ENCODE measurements at regions of chr19 and their contacts with region 1.

Region 1: GRCh38 chr19:6110360-6110977 is at the start of gene RFX2:
- DNase-seq: peak; percentile 97 to 100 (median 99)
- ATAC-seq: peak; percentile 99
- H3K4me3 ChIP-seq: peak within 1 kb of the TSS; percentile 60
- H3K4me3 Mint-ChIP-seq: peak within 1 kb of the TSS; percentile 84 to 98 (median 92)
- H3K27ac ChIP-seq: peak within 1 kb of the TSS; percentile 64
- H3K27ac Mint-ChIP-seq: peak within 1 kb of the TSS; percentile 71 to 92 (median 88)
- H3K4me1 ChIP-seq: peaks cover 8 to 10% of the 10 kb centered on the region in 2 donors
- H3K4me1 Mint-ChIP-seq: peaks cover 21 to 27% (median 25%) of the 10 kb centered on the region in 7 donors
- H3K27me3 ChIP-seq: peaks cover 0 to 4% of the 10 kb centered on the region in 2 donors
- H3K27me3 Mint-ChIP-seq: peaks cover 0 to 19% (median 4%) of the 10 kb centered on the region in 5 donors
- total RNA-seq, gene RFX2: 4.0 to 18.4 (median 8.4) TPM

Region 2: GRCh38 chr19:5719961-5720790 is 390.3 kb before region 1 on chr19 and contains the starts of genes CATSPERD and LONP1:
- CTCF ChIA-PET with region 1: no interaction called
- POLR2A ChIA-PET with region 1: no interaction called
- intact Hi-C with region 1: loop called in 1 of 2 experiments (anchors 1 kb)
- DNase-seq: peak; percentile 96 to 100 (median 98)
- ATAC-seq: peak; percentile 95
- H3K4me3 ChIP-seq: peak within 1 kb of the TSS; percentile 86
- H3K4me3 Mint-ChIP-seq: peak within 1 kb of the TSS; percentile 87 to 96 (median 93)
- H3K27ac ChIP-seq: peak within 1 kb of the TSS; percentile 97
- H3K27ac Mint-ChIP-seq: peak within 1 kb of the TSS; percentile 94 to 98 (median 95)
- H3K4me1 ChIP-seq: peaks cover 12 to 16% of the 10 kb centered on the region in 2 donors
- H3K4me1 Mint-ChIP-seq: peaks cover 9 to 42% (median 29%) of the 10 kb centered on the region in 7 donors
- H3K27me3 ChIP-seq: no peaks in the 10 kb centered on the region
- H3K27me3 Mint-ChIP-seq: peaks cover 0 to 2% (median 0%) of the 10 kb centered on the region in 5 donors
- total RNA-seq, gene CATSPERD: 0.07 TPM in 1 of 5 experiments, not detected in the others
- total RNA-seq, gene LONP1: 62.8 to 102 (median 74.8) TPM

Region 3: GRCh38 chr19:5977785-5978605 is 132.5 kb before region 1 on chr19 and contains the start of gene RANBP3:
- CTCF ChIA-PET with region 1: no interaction called
- POLR2A ChIA-PET with region 1: no interaction called
- intact Hi-C with region 1: loop called in 1 of 2 experiments (anchors 1 kb)
- DNase-seq: peak; percentile 94 to 99 (median 99)
- ATAC-seq: peak; percentile 94
- H3K4me3 ChIP-seq: peak within 1 kb of the TSS; percentile 78
- H3K4me3 Mint-ChIP-seq: peak within 1 kb of the TSS; percentile 92 to 99 (median 96)
- H3K27ac ChIP-seq: peak within 1 kb of the TSS; percentile 94
- H3K27ac Mint-ChIP-seq: peak within 1 kb of the TSS; percentile 91 to 97 (median 95)
- H3K4me1 ChIP-seq: peaks cover 31 to 45% of the 10 kb centered on the region in 2 donors
- H3K4me1 Mint-ChIP-seq: peaks cover 42 to 65% (median 55%) of the 10 kb centered on the region in 7 donors
- H3K27me3 ChIP-seq: no peaks in the 10 kb centered on the region
- H3K27me3 Mint-ChIP-seq: peaks cover 0 to 2% (median 0%) of the 10 kb centered on the region in 5 donors
- total RNA-seq, gene RANBP3: 88.3 to 104 (median 94.0) TPM

Region 4: GRCh38 chr19:6041991-6042481 is 68.4 kb before region 1 on chr19:
- CTCF ChIA-PET with region 1: no interaction called
- POLR2A ChIA-PET with region 1: no interaction called
- intact Hi-C with region 1: no loop called
- DNase-seq: no peak
- ATAC-seq: no peak
- H3K4me3 ChIP-seq: no peak overlapping the region
- H3K4me3 Mint-ChIP-seq: no peak overlapping the region
- H3K27ac ChIP-seq: no peak overlapping the region
- H3K27ac Mint-ChIP-seq: no peak overlapping the region
- H3K4me1 ChIP-seq: no peaks in the 10 kb centered on the region
- H3K4me1 Mint-ChIP-seq: peaks cover 0 to 15% (median 0%) of the 10 kb centered on the region in 7 donors
- H3K27me3 ChIP-seq: no peaks in the 10 kb centered on the region
- H3K27me3 Mint-ChIP-seq: no peaks in the 10 kb centered on the region

Region 5: DNA sequence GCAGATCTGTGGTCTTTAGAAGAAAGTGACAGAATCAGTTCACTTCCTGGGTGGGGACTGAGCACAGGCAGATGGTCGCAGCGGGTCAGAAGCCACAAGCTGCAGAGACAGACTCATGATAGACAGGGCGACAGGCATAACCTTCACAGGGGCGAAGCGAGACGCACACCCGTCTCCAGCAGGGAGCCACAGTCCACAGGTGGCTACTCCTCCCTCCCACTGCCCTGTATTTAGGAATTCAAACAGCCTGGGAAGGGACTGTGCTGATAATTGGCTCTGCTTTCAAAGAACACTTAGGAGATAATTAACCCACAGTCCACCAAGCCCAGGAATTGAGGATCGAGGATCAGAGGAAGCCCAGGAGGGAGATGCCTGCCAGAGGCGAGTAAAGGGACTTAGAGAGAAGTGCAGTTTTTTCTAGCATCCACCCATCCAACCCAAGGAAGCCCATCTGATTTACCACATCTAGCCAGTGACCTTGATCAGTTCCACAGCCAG is 23.3 kb before region 1 on chr19:
- CTCF ChIA-PET with region 1: interaction called, 3 read pairs
- POLR2A ChIA-PET with region 1: no interaction called
- intact Hi-C with region 1: loop called in 1 of 2 experiments (anchors 1 kb)
- DNase-seq: peak in 3 of 9 donors; percentile 24 to 37 (median 25)
- ATAC-seq: peak; percentile 54
- H3K4me3 ChIP-seq: peak overlapping the region; percentile 24
- H3K4me3 Mint-ChIP-seq: peak overlapping the region; percentile 71 to 96 (median 82)
- H3K27ac ChIP-seq: peak overlapping the region; percentile 62
- H3K27ac Mint-ChIP-seq: peak overlapping the region; percentile 64 to 94 (median 85)
- H3K4me1 ChIP-seq: peaks cover 10 to 19% of the 10 kb centered on the region in 2 donors
- H3K4me1 Mint-ChIP-seq: peaks cover 18 to 28% (median 21%) of the 10 kb centered on the region in 7 donors
- H3K27me3 ChIP-seq: no peaks in the 10 kb centered on the region
- H3K27me3 Mint-ChIP-seq: peaks cover 0 to 2% (median 0%) of the 10 kb centered on the region in 5 donors

Region 6: DNA sequence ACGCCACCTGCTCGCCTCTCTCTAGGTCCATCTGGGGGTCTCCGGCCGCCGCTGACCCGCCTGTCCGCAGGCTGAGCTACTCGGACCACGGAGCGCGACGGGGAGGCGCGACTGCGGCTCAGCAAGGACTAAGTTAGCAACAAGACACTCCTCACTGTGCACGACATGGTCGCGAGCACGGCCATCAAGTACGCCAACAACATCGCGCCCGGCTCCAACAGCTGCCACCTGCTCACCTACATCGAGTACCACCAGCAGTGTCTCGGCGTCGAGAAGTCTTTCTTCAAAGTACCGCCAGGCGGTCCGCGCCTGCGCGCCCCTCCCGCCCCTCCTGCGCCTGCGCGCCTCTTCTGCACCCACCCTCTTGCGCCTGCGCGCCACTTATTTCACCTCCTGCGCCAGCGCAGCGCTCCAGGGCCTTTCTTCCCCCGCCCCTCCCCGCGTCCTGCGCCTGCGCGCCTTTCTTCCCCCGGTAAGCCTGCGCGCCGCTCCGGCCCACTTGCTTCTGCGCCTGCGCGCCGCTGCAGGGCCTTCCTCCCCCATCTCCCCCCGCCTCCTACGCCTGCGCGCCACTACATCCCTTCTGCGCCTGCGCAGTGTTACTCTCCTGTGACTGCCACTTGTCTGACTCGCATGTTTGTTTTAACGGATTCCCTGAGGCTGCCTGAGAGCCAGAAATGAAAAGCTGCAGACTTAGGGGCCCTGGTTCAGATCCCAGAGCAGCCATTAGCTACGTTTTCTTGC is 88.9 kb after region 1 on chr19:
- CTCF ChIA-PET with region 1: no interaction called
- POLR2A ChIA-PET with region 1: no interaction called
- intact Hi-C with region 1: loop called in 1 of 2 experiments (anchors 1 kb)
- DNase-seq: peak; percentile 97 to 100 (median 99)
- ATAC-seq: peak; percentile 93
- H3K4me3 ChIP-seq: peak overlapping the region; percentile 97
- H3K4me3 Mint-ChIP-seq: peak overlapping the region; percentile 92 to 99 (median 95)
- H3K27ac ChIP-seq: peak overlapping the region; percentile 70
- H3K27ac Mint-ChIP-seq: peak overlapping the region; percentile 89 to 97 (median 91)
- H3K4me1 ChIP-seq: peaks cover 6% of the 10 kb centered on the region in 2 donors
- H3K4me1 Mint-ChIP-seq: peaks cover 5 to 20% (median 18%) of the 10 kb centered on the region in 7 donors
- H3K27me3 ChIP-seq: no peaks in the 10 kb centered on the region
- H3K27me3 Mint-ChIP-seq: peaks cover 0 to 8% (median 4%) of the 10 kb centered on the region in 5 donors